Activated T-helper 1 cell treated with anti-CD3 and anti-CD28 coated beads, Interleukin-12 subunit alpha, Interleukin-12 subunit beta, Interleukin-2, Interleukin-4 antibody, amounts not matched to agents 30 ng/mL and 10 ng/mL and 1 ng/mL, durations not matched to agents 14 hours and 24 hours and 36 hours (primary cell): ENCODE measurements at regions of chr10 and their contacts with region 1.

Region 1: GRCh38 chr10:48802611-48803071 is 118.0 kb downstream of the WDFY4 start:
- DNase-seq: peak; percentile 10
- H3K4me3 Mint-ChIP-seq: no peak overlapping the region
- H3K27ac Mint-ChIP-seq: peak overlapping the region; percentile 27
- H3K4me1 Mint-ChIP-seq: peaks cover 49% of the 10 kb centered on the region
- H3K27me3 Mint-ChIP-seq: peaks cover 4% of the 10 kb centered on the region

Region 2: DNA sequence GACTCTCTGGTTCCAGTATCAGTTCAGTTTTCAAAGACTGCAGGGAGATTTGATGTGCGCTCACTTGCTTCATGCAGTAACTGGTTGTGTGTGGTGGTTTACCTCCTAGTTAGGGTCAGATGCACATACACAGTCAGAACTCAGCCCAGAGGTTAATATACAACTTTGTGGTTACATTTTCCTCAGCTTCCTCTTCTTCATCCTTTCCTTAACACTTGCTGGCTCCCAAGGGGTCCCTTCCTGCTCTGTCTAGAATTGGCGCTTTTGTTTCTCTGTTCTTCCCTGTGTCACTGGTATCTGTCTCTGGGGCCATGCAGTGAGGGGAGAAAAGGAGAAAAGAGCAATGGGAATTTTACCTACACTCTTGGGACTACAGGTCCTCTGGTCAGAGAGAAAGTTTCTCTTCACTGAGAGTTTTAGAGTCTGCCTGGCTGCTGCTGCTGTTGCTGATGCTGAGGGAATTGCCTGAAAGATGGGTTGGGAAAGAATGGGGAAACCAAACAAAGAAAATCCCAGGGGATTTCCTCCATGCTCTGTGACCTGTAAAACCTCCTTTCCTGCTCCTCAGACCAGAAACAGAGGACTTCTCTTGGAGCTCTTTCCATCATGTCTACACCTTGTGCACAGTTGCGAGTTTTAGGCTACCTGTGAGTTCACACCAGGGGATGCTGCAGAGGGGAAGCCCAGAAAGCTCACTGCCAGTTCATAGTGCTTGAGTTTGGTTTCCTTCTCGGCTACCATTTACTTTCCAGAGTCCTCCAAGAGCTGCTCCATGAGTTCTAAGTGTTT is 43.3 kb before region 1 on chr10:
- intact Hi-C with region 1: no loop called
- DNase-seq: no peak
- H3K4me3 Mint-ChIP-seq: no peak overlapping the region
- H3K27ac Mint-ChIP-seq: no peak overlapping the region
- H3K4me1 Mint-ChIP-seq: no peaks in the 10 kb centered on the region
- H3K27me3 Mint-ChIP-seq: peaks cover 10% of the 10 kb centered on the region

Region 3: GRCh38 chr10:49076741-49077521 is 274.3 kb after region 1 on chr10:
- intact Hi-C with region 1: loop called (anchors 5 kb)
- DNase-seq: no peak
- H3K4me3 Mint-ChIP-seq: no peak overlapping the region
- H3K27ac Mint-ChIP-seq: peak overlapping the region; percentile 37
- H3K4me1 Mint-ChIP-seq: peaks cover 30% of the 10 kb centered on the region
- H3K27me3 Mint-ChIP-seq: peaks cover 3% of the 10 kb centered on the region

Region 4: DNA sequence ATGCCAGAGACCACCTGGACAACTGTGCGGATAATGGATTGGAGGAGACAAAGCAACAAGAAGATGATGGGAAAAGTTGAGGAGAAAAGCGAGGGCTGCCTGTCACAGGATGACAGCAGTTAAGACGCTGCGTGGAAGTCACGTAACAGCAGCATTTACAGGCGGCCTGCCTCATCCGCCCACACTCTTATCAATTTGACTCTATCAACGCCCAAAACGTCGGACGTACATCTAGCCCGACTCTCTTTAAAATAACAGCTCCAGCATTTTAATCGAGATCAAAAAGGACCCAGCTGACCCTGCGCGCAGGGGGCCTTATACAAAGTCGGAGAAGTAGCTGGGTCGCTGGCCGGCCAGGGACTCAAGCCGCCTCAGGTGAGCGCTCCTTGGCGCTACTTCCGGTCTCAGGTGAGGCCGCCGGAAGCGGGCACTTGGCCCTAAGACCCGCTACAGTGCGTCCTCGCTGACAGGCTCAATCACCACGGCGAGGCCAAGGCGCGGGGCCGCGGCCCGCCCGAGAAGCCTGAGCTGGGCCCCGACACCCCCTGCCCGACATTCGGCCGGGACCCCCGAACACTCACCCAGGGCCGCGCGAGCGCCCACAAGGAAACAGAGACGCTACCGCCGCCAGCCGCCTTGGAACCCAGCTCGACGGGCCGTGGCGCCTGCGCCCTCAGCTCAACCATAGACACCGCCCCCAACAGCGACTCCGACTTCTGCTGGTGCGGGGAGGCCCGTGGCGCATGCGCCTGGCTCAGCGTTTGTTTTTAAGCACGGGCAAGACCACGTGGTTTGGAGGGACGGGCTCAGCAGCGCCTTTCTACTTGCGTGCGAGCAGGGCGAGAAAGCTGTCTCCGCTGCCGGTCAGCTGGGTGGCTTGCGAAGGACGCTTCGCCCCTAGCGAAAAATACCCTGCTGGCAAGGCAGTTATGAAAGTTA is 736.0 kb after region 1 on chr10 and contains the start of gene ERCC6:
- intact Hi-C with region 1: loop called (anchors 10 kb)
- DNase-seq: peak; percentile 95
- H3K4me3 Mint-ChIP-seq: peak within 1 kb of the TSS; percentile 92
- H3K27ac Mint-ChIP-seq: peak within 1 kb of the TSS; percentile 96
- H3K4me1 Mint-ChIP-seq: peaks cover 34% of the 10 kb centered on the region
- H3K27me3 Mint-ChIP-seq: peaks cover 2% of the 10 kb centered on the region
- total RNA-seq, gene ERCC6: 11.2 and 11.7 TPM in 2 replicates